ENCODE measurements at regions of chr3 and their contacts with region 1.

Region 1: GRCh38 chr3:99920481-99921376 is 103.1 kb downstream of the CMSS1 start:
- DNase-seq: peak; percentile 70 to 86 (median 82)
- ATAC-seq: peak; percentile 59 to 88 (median 72)
- H3K4me3 ChIP-seq: no peak overlapping the region
- H3K27ac ChIP-seq: peak overlapping the region; percentile 54 to 88 (median 78)
- H3K4me1 ChIP-seq: peaks cover 0 to 52% (median 36%) of the 10 kb centered on the region in 12 donors
- H3K27me3 ChIP-seq: no peaks in the 10 kb centered on the region
- CTCF ChIP-seq: no peak
- POLR2A ChIP-seq: no peak

Region 2: DNA sequence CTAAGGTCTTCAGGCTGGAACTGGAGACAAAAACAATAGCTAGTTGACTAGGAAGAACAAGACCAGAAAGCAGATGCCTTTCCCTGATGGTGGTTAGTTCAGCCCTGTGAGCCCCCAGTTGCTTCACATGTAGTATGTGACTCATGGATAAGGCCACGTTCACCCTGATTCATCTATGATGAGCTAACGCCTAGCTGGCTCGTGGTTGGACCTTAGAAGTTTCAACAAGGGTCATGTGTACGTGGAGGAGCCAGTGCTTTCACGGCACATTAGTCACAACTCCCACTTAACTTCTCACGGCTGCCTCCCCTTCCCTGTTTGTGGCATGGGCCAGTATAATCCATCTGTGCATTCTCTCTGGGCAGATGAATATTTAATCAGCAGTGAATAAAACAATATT is 261.7 kb before region 1 on chr3:
- intact Hi-C with region 1: no loop called
- DNase-seq: peak in 3 of 5 donors; percentile 25 to 67 (median 50)
- ATAC-seq: peak; percentile 16 to 96 (median 73)
- H3K4me3 ChIP-seq: no peak overlapping the region
- H3K27ac ChIP-seq: peak overlapping the region in 11 of 12 donors; percentile 14 to 76 (median 38)
- H3K4me1 ChIP-seq: peaks cover 0 to 28% (median 4%) of the 10 kb centered on the region in 12 donors
- H3K27me3 ChIP-seq: no peaks in the 10 kb centered on the region
- CTCF ChIP-seq: no peak
- POLR2A ChIP-seq: no peak

Region 3: GRCh38 chr3:99885854-99886253 is 34.9 kb before region 1 on chr3:
- intact Hi-C with region 1: loop called in 2 of 10 experiments (anchors 5 kb)
- DNase-seq: no peak
- ATAC-seq: no peak
- H3K4me3 ChIP-seq: no peak overlapping the region
- H3K27ac ChIP-seq: no peak overlapping the region
- H3K4me1 ChIP-seq: peaks cover 0 to 41% (median 15%) of the 10 kb centered on the region in 12 donors
- H3K27me3 ChIP-seq: no peaks in the 10 kb centered on the region
- CTCF ChIP-seq: peak in 2 of 12 donors; percentile 22 to 40
- POLR2A ChIP-seq: no peak

Measured in heart left ventricle (tissue), 16 donors.